Vagina (tissue), 2 donors: ENCODE measurements at regions of chr15 and their contacts with region 1.

Region 1: DNA sequence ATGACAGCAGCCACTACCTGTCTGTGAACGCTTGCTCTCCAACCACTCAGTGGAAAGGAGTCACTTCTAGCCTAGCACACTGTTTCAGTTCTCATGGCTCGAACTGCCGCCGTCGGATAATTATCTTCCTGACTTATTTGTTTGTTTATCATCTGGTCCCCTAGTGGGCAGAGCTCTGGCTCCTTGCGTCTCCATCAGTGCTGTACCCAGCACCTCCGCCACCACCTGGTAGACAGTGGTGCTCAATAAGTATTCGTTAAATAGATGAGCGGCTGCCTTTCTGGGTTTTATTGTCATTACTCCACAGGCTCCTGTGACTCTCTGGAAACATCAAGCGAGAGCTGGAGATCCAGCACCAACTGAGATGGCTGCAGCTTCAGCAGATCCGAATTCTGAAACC is 297.5 kb downstream of the NTRK3 start:
- DNase-seq: no peak
- H3K4me3 ChIP-seq: no peak overlapping the region
- H3K27ac ChIP-seq: no peak overlapping the region
- H3K4me1 ChIP-seq: peaks cover 9% of the 10 kb centered on the region
- H3K27me3 ChIP-seq: no peaks in the 10 kb centered on the region
- CTCF ChIP-seq: no peak
- POLR2A ChIP-seq: no peak

Region 2: GRCh38 chr15:88258093-88258641 is 299.1 kb after region 1 on chr15:
- intact Hi-C with region 1: loop called (anchors 10 kb)
- DNase-seq: no peak
- H3K4me3 ChIP-seq: no peak overlapping the region
- H3K27ac ChIP-seq: no peak overlapping the region
- H3K4me1 ChIP-seq: peaks cover 19% of the 10 kb centered on the region
- H3K27me3 ChIP-seq: peaks cover 3% of the 10 kb centered on the region
- CTCF ChIP-seq: no peak
- POLR2A ChIP-seq: no peak